Naive thymus-derived CD4-positive, alpha-beta T cell (primary cell): ENCODE measurements at regions of chr10 and their contacts with region 1.

Region 1: DNA sequence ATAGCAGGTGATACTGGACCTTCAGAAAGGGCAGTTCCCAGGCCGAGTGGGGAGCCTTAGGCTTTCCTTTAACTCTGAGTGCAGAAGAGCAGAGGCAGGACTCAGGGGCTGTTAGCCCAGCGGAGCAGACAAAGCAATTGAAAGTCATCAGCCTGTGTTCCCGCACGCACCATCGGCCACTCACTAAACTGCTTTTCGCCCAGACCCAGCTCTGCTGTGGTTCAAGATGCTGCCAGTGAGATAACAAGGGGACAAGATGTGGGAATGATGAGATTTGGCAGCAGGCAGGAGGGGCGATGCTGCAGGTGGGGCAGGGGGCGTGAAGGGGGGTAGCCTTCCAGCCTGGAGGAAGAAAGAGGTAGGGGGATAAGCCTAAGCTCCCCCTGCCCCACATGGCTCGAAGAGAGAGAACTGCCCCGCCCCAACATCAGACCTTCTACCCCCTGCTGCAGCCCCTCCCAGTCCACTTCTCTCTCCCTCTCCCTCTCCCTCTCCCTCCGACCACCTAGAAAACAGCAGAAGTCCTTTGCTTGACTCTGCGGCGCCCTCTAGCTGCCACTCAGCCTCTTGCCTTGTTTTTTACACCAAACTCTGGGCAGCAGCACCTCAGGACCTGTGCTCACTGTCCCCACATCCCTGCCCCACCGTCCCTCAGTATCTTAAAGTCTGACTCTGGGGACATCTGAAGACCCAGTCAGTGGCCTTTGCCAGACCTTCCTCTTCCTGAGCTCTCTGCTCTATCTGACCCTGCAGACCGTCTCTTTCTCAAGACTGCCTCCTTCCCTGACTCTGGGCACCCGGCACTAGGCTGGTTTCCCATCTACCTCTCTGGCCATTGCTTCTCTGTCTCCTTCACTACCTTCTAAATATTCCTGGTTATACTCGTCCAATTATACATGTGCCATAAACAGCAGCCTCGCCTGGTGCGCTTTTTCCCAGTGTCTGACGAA is 110.5 kb downstream of the C10orf105 start:
- DNase-seq: peak; percentile 12 to 62 (median 40)
- ATAC-seq: peak; percentile 70
- H3K4me3 ChIP-seq: no peak overlapping the region
- H3K4me3 Mint-ChIP-seq: no peak overlapping the region
- H3K27ac ChIP-seq: no peak overlapping the region
- H3K27ac Mint-ChIP-seq: no peak overlapping the region
- H3K4me1 ChIP-seq: no peaks in the 10 kb centered on the region
- H3K4me1 Mint-ChIP-seq: peaks cover 0 to 6% (median 0%) of the 10 kb centered on the region in 7 donors
- H3K27me3 ChIP-seq: no peaks in the 10 kb centered on the region
- H3K27me3 Mint-ChIP-seq: peaks cover 0 to 16% (median 2%) of the 10 kb centered on the region in 5 donors

Region 2: DNA sequence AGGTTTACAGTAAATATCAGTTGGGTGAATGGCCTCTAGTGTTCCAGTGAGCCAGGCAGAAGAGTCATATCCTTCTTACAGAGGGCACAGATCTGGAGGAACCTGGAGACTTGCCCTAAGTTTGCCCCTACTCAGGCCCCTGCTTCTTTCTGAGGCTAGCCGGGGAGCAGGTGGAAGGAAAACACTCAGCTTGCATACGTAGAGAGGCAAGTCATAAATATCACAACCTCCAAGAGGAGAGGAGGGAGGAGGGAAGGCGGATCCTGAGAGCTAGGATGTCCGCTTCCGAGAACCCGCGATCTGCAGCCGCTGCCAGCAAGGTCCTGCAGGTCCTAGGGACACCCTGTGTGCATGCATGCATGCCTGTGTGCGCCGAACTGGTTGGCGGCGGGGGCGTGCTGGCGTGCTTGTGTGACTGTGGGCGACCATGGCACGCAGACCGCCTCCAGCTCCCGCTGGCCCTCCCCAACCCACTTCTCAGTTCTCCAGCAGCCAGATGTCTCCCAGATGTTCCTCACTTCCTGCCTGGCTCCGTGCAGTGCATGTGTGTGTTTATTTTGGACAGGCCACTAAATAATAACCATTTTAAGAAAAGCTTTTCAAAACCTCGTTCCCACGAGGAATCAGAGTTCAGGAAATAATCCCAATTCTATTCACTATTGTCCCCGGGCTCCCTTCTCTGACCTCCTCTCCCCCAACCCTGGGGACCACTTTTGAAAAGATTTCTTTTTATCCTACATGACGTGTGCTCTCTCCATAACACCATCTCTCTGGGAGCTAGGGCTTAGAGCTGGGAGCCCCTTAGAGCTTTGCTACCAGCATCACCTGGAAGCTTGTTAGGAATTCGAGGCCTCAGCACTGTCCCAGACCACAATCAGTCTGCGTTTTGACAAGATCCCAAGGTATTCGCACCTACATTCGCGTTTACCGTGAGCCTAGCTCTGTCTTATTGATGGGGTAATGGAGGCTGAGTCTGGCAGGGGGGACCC is 364.4 kb before region 1 on chr10:
- CTCF ChIA-PET with region 1: no interaction called
- POLR2A ChIA-PET with region 1: no interaction called
- intact Hi-C with region 1: no loop called
- DNase-seq: no peak
- ATAC-seq: peak; percentile 5
- H3K4me3 ChIP-seq: no peak overlapping the region
- H3K4me3 Mint-ChIP-seq: no peak overlapping the region
- H3K27ac ChIP-seq: no peak overlapping the region
- H3K27ac Mint-ChIP-seq: no peak overlapping the region
- H3K4me1 ChIP-seq: no peaks in the 10 kb centered on the region
- H3K4me1 Mint-ChIP-seq: no peaks in the 10 kb centered on the region
- H3K27me3 ChIP-seq: no peaks in the 10 kb centered on the region
- H3K27me3 Mint-ChIP-seq: peaks cover 0 to 8% (median 0%) of the 10 kb centered on the region in 5 donors

Region 3: DNA sequence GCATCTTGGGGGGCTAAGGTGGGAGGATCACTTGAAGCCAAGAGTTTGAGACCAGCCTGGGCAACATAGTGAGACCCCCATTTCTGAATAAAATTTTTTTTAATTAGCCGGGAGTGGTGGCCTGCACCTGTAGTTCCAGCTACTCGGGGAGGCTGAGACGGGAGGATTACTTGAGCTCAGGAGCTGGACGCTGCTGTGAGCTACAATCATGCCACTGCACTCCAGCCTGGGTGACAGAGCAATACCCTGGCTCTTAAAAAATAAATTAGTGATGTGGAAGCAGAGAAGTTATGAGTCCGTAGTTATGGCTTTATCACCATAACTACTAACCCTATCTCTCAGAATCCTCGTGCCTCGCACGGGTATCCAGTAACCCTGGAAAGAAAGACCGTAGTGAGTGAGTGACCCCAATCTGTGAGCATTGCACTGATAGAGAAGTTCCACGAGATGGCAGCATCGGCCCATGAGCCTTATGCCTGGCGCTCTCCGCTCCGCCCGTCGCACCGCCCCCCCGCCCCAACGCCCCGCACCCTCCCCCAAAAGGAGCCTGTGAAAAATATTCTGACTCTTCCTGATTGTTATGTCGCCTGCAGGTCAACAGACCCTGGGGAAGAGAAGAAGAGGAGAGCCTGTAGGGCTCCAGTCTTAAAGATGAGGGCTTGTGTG is 294.9 kb before region 1 on chr10:
- CTCF ChIA-PET with region 1: interaction called, 3 read pairs
- POLR2A ChIA-PET with region 1: no interaction called
- intact Hi-C with region 1: loop called in 1 of 2 experiments (anchors 1 kb)
- DNase-seq: peak; percentile 18 to 56 (median 49)
- ATAC-seq: peak; percentile 62
- H3K4me3 ChIP-seq: no peak overlapping the region
- H3K4me3 Mint-ChIP-seq: peak overlapping the region in 3 of 10 donors; percentile 3 to 48 (median 25)
- H3K27ac ChIP-seq: no peak overlapping the region
- H3K27ac Mint-ChIP-seq: peak overlapping the region in 1 of 9 donors; percentile 55
- H3K4me1 ChIP-seq: peaks cover 5 to 6% of the 10 kb centered on the region in 2 donors
- H3K4me1 Mint-ChIP-seq: peaks cover 0 to 26% (median 13%) of the 10 kb centered on the region in 7 donors
- H3K27me3 ChIP-seq: no peaks in the 10 kb centered on the region
- H3K27me3 Mint-ChIP-seq: peaks cover 0 to 16% (median 14%) of the 10 kb centered on the region in 5 donors

Region 4: DNA sequence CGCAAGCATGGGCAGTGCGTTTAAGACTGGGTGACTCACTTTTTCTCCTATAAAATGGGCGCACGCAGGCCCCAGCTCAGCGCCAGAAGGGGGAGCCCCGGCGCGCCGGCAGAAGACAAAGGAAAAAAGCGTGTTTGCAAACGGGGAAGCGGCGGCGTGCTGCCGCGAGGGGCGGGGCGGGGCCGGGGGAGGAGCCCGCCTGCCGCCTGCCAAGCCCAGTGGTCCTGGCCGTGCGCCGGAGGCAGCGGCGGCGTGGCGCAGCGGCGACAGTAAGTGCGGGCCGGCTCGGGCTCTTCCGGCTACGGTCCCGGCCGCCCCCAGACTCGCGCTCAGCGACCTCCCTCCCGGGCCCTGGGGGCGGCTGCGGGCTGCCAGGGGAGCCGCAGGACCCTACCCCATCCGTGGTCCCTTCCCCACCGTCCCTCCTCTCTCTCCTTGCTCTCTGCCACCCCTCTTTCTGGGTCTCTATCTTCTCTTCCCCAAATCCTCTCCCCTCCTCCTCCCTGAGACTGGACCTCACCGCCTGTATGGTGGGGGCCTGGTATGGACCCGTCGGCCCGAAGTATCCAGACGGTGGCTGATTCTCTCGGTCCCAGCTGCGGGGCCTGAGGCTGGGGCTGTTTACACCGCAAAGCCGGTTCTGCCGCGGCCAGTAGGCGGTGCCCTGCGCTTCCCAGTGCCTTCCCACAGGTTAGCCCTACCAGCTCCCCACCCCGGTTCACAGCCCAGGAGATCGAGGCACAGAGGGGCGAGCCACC is 289.9 kb before region 1 on chr10 and contains the start of gene SLC29A3:
- CTCF ChIA-PET with region 1: no interaction called
- POLR2A ChIA-PET with region 1: no interaction called
- intact Hi-C with region 1: loop called in 1 of 2 experiments (anchors 1 kb)
- DNase-seq: peak; percentile 45 to 85 (median 70)
- ATAC-seq: peak; percentile 91
- H3K4me3 ChIP-seq: peak within 1 kb of the TSS; percentile 81
- H3K4me3 Mint-ChIP-seq: peak within 1 kb of the TSS; percentile 85 to 97 (median 94)
- H3K27ac ChIP-seq: peak within 1 kb of the TSS; percentile 62
- H3K27ac Mint-ChIP-seq: peak within 1 kb of the TSS; percentile 71 to 94 (median 85)
- H3K4me1 ChIP-seq: peaks cover 5 to 10% of the 10 kb centered on the region in 2 donors
- H3K4me1 Mint-ChIP-seq: peaks cover 27 to 53% (median 40%) of the 10 kb centered on the region in 7 donors
- H3K27me3 ChIP-seq: no peaks in the 10 kb centered on the region
- H3K27me3 Mint-ChIP-seq: no peaks in the 10 kb centered on the region
- total RNA-seq, gene SLC29A3: 3.5 to 7.2 (median 5.1) TPM

Region 5: GRCh38 chr10:71383972-71384687 is 225.0 kb before region 1 on chr10:
- CTCF ChIA-PET with region 1: no interaction called
- POLR2A ChIA-PET with region 1: no interaction called
- intact Hi-C with region 1: loop called (anchors 5 to 10 kb)
- DNase-seq: peak; percentile 40 to 82 (median 61)
- ATAC-seq: peak; percentile 94
- H3K4me3 ChIP-seq: no peak overlapping the region
- H3K4me3 Mint-ChIP-seq: no peak overlapping the region
- H3K27ac ChIP-seq: no peak overlapping the region
- H3K27ac Mint-ChIP-seq: no peak overlapping the region
- H3K4me1 ChIP-seq: no peaks in the 10 kb centered on the region
- H3K4me1 Mint-ChIP-seq: no peaks in the 10 kb centered on the region
- H3K27me3 ChIP-seq: no peaks in the 10 kb centered on the region
- H3K27me3 Mint-ChIP-seq: peaks cover 0 to 24% (median 7%) of the 10 kb centered on the region in 5 donors

Region 6: GRCh38 chr10:71561003-71561574 is 48.0 kb before region 1 on chr10:
- CTCF ChIA-PET with region 1: no interaction called
- POLR2A ChIA-PET with region 1: no interaction called
- intact Hi-C with region 1: no loop called
- DNase-seq: no peak
- ATAC-seq: no peak
- H3K4me3 ChIP-seq: no peak overlapping the region
- H3K4me3 Mint-ChIP-seq: no peak overlapping the region
- H3K27ac ChIP-seq: no peak overlapping the region
- H3K27ac Mint-ChIP-seq: no peak overlapping the region
- H3K4me1 ChIP-seq: no peaks in the 10 kb centered on the region
- H3K4me1 Mint-ChIP-seq: peaks cover 0 to 4% (median 0%) of the 10 kb centered on the region in 7 donors
- H3K27me3 ChIP-seq: no peaks in the 10 kb centered on the region
- H3K27me3 Mint-ChIP-seq: peaks cover 4 to 16% (median 14%) of the 10 kb centered on the region in 5 donors